MCF 10A (cell line): ENCODE measurements at regions of chr12 and their contacts with region 1.

Region 1: DNA sequence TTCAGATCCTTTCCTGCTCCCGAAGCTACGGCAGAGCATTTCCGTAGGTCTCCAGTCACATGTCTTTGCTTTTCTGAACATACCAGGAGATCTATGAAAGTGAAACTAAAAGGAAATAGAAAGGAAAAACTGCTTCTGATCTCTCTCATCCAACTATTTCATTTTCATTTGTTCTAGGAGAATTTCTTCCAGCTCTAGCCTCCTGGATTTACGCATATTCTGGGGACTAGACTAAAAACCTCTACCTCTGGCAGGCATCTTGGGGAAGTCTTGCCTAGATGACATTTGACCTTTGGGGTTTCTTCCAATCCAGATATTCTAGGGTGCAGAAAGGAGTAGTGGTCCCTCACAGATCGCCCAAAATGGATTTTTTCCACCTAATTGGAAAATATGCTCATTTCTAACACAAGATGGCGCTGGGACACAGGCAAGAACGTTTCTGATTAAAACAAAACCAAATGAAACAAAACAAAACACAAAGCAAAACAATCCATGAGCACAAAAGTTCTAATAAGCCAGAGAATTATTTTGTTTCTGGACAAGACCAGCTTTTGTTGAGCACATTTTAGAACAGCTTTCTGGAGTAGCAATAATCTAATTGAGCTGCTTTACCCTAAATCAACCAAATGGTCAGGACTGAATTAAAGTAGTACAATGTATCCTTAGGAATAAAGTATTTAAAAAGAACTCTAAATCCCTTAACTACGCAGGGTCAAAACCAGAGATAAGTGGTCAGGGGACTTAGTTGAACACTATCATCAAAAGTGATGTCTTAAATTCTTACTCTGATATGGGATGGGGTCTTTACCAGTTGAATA is 12.3 kb upstream of the PARP11 start:
- DNase-seq: peak; percentile 47
- H3K4me3 Mint-ChIP-seq: peak overlapping the region; percentile 59
- H3K27ac Mint-ChIP-seq: peak overlapping the region; percentile 63
- H3K4me1 Mint-ChIP-seq: peaks cover 6% of the 10 kb centered on the region
- H3K27me3 Mint-ChIP-seq: peaks cover 20% of the 10 kb centered on the region
- CTCF ChIP-seq: peak; percentile 83

Region 2: GRCh38 chr12:3872800-3873636 is 12.5 kb before region 1 on chr12 and contains the start of gene PARP11:
- CTCF ChIA-PET with region 1: interaction called, 23 read pairs
- POLR2A ChIA-PET with region 1: interaction called, 14 read pairs
- intact Hi-C with region 1: no loop called
- DNase-seq: peak; percentile 95
- H3K4me3 Mint-ChIP-seq: peak within 1 kb of the TSS; percentile 97
- H3K27ac Mint-ChIP-seq: peak within 1 kb of the TSS; percentile 98
- H3K4me1 Mint-ChIP-seq: peaks cover 10% of the 10 kb centered on the region
- H3K27me3 Mint-ChIP-seq: peaks cover 9% of the 10 kb centered on the region
- CTCF ChIP-seq: no peak
- total RNA-seq, gene PARP11: 7.0 and 10.3 TPM in 2 replicates

Region 3: DNA sequence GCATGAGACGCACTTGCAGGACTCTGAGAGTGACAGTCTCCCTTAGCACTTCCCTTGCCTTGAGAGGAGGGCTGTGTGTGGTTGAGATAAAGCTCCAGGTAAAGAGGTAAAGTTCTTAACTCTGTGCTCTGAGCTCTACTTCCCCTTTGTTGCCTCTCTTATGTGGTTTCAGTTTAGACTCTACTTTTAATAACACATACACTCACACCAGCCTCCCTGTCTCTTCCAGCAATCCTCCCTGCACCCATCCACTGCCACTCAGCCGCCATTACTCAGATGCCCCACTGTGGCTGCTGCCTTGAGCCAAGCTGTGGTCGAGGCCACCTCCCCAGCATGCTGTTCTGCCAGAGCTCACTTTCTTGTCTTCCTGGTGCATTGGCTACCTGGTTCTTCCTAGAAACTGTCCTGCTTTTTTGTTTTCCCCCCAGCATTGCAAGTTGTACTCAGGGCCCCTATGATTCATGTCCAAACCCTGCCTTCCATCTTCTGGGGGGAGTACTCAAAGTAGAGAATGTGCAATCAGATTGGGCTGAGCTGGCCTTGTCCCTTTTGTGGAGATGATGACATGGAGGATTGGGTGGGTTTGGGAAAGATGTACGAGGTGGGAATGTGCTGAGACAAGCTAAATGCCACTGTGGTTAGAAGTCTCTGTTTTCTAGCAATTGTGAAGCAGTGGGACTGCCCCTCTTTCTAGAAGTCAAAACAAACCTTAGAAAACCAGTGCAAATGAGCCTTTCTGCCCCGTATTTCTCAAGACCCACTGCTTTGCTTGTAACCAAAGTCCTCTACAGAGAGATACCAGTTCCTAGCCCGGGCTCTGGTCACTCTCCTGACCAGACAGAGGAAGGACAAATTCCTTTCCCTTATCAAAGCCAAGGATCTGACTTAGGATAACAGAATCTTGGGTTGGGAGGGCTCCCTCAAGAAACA is 103.3 kb after region 1 on chr12:
- CTCF ChIA-PET with region 1: interaction called, 146 read pairs
- POLR2A ChIA-PET with region 1: no interaction called
- intact Hi-C with region 1: no loop called
- DNase-seq: no peak
- H3K4me3 Mint-ChIP-seq: no peak overlapping the region
- H3K27ac Mint-ChIP-seq: no peak overlapping the region
- H3K4me1 Mint-ChIP-seq: no peaks in the 10 kb centered on the region
- H3K27me3 Mint-ChIP-seq: peaks cover 34% of the 10 kb centered on the region
- CTCF ChIP-seq: no peak

Region 4: GRCh38 chr12:4037747-4038312 is 152.3 kb after region 1 on chr12:
- CTCF ChIA-PET with region 1: interaction called, 220 read pairs
- POLR2A ChIA-PET with region 1: interaction called, 16 read pairs
- intact Hi-C with region 1: loop called (anchors 1 kb)
- DNase-seq: peak; percentile 69
- H3K4me3 Mint-ChIP-seq: no peak overlapping the region
- H3K27ac Mint-ChIP-seq: no peak overlapping the region
- H3K4me1 Mint-ChIP-seq: peaks cover 22% of the 10 kb centered on the region
- H3K27me3 Mint-ChIP-seq: peaks cover 4% of the 10 kb centered on the region
- CTCF ChIP-seq: peak; percentile 71

Region 5: GRCh38 chr12:4257442-4257841 is 372.0 kb after region 1 on chr12:
- CTCF ChIA-PET with region 1: interaction called, 12 read pairs
- POLR2A ChIA-PET with region 1: no interaction called
- intact Hi-C with region 1: no loop called
- DNase-seq: no peak
- H3K4me3 Mint-ChIP-seq: no peak overlapping the region
- H3K27ac Mint-ChIP-seq: no peak overlapping the region
- H3K4me1 Mint-ChIP-seq: no peaks in the 10 kb centered on the region
- H3K27me3 Mint-ChIP-seq: peaks cover 54% of the 10 kb centered on the region
- CTCF ChIP-seq: no peak

Region 6: DNA sequence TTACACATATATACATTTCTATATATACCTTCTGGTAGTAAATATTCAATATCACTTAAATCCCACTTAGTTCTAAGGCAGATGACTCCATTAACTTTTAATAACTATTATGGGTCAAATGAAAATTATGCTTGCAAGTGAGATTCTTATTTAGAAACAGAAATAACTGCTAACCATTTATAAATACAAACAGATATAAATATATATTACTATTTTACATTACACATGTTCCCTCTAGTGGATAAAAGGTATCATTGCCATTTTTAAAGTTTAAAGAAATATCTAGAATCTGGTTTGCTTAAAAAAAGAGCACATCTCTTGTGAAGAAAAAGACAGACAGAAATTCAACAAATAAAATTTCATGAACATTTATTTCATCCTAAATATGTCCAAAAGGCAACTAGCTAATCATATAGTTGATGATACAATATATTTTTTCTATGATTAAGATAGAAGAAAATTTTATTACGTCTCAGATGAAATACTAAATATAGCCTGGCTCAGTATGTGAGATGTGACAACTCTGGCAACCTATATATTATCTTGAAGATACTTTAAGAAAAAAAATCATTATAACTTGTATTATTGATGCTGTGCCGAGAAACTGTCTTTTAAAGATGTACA is 641.5 kb after region 1 on chr12:
- CTCF ChIA-PET with region 1: no interaction called
- POLR2A ChIA-PET with region 1: no interaction called
- intact Hi-C with region 1: loop called (anchors 5 kb)
- DNase-seq: peak; percentile 16
- H3K4me3 Mint-ChIP-seq: no peak overlapping the region
- H3K27ac Mint-ChIP-seq: no peak overlapping the region
- H3K4me1 Mint-ChIP-seq: no peaks in the 10 kb centered on the region
- H3K27me3 Mint-ChIP-seq: no peaks in the 10 kb centered on the region
- CTCF ChIP-seq: peak; percentile 31